Psoas muscle (tissue), 8 donors: ENCODE measurements at regions of chr19 and their contacts with region 1.

Region 1: GRCh38 chr19:9140159-9140874 is at the start of gene ZNF317:
- DNase-seq: peak; percentile 89 to 95
- ATAC-seq: peak; percentile 97 to 100 (median 98)
- H3K4me3 ChIP-seq: peak within 1 kb of the TSS; percentile 85
- H3K27ac ChIP-seq: peak within 1 kb of the TSS; percentile 93
- H3K4me1 ChIP-seq: peaks cover 24% of the 10 kb centered on the region
- H3K27me3 ChIP-seq: no peaks in the 10 kb centered on the region
- CTCF ChIP-seq: no peak
- total RNA-seq, gene ZNF317: 13.7 to 23.6 (median 16.9) TPM

Region 2: DNA sequence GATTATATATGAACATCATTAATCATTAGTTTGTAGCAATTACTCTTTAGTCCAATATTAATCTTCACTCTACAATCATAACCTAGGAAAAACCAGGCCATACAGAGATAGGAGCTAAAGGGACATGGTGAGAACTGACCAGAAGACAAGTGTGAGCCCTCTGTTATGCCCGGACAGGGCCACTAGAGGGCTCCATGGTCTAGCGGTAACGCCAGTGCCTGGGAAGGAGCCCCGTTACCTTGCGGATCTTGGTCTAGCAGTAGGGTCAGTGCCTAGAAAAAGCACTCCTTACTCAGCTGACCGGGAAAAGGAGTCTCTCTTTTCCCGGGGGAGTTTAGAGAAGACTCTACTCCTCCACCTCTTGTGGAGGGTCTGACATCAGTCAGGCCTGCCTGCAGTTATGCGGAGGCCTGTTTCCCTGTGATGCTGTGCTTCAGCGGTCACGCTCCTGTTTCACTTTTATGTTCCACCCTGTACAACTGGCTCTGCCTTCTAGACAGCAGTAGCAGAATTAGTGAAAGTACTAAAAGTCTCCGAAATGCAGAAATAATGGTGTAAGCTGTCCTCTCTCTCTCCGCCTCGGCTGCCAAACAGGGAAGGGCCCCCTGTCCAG is 65.3 kb after region 1 on chr19:
- intact Hi-C with region 1: loop called in 1 of 2 experiments (anchors 5 kb)
- DNase-seq: peak; percentile 61 to 74
- ATAC-seq: peak in 1 of 4 donors; percentile 54
- H3K4me3 ChIP-seq: peak overlapping the region; percentile 54
- H3K27ac ChIP-seq: no peak overlapping the region
- H3K4me1 ChIP-seq: no peaks in the 10 kb centered on the region
- H3K27me3 ChIP-seq: peaks cover 0 to 4% (median 0%) of the 10 kb centered on the region in 3 donors
- CTCF ChIP-seq: peak; percentile 78

Region 3: GRCh38 chr19:9538183-9539058 is 398.1 kb after region 1 on chr19 and contains the start of gene ZNF426:
- intact Hi-C with region 1: loop called in 1 of 2 experiments (anchors 5 kb)
- DNase-seq: peak; percentile 87 to 92
- ATAC-seq: peak; percentile 95 to 99 (median 97)
- H3K4me3 ChIP-seq: peak within 1 kb of the TSS; percentile 91
- H3K27ac ChIP-seq: peak within 1 kb of the TSS; percentile 87
- H3K4me1 ChIP-seq: peaks cover 12% of the 10 kb centered on the region
- H3K27me3 ChIP-seq: no peaks in the 10 kb centered on the region
- CTCF ChIP-seq: no peak
- total RNA-seq, gene ZNF426: 5.2 to 12.3 (median 7.4) TPM

Region 4: DNA sequence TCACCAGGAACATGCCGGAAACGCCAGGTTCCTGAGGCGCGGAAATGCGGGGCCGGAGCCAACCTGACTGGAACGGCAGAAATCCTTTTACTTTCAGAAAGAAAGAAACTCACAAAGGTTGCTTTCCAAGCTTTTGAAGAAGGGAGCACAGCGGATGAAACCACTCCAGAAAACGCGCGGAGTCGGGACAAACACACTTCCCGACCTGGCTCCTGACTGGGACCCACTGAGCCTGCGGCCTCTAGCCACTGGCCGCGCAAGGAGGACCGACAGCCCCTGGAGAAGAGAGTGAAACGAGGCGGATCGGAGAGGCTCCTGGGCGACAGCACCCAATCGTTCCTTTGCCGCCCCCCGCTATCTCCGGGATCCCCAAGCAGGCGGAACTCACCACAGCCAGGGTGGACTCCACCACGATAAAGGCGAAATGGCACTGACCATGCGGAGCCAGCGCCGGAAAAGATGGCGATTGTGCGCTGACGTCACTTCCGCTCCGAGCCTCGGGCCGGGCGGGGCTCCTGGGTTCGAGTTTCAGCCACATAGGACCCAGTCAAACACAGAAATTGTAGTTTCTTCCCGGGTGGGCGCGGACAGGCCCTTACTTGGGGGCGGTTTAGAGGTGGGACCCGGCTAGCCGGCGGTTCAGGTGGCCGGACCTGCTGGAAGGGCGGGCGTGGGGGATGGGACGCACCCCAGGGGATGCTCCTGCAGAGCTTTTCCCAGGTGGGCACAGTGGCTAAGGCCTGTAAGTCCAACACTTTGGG is 443.9 kb after region 1 on chr19 and contains the start of gene ZNF121:
- intact Hi-C with region 1: loop called in 1 of 2 experiments (anchors 10 kb)
- DNase-seq: peak; percentile 86 to 91
- ATAC-seq: peak; percentile 95 to 99 (median 98)
- H3K4me3 ChIP-seq: peak within 1 kb of the TSS; percentile 99
- H3K27ac ChIP-seq: peak within 1 kb of the TSS; percentile 98
- H3K4me1 ChIP-seq: peaks cover 19% of the 10 kb centered on the region
- H3K27me3 ChIP-seq: peaks cover 0 to 17% (median 0%) of the 10 kb centered on the region in 3 donors
- CTCF ChIP-seq: no peak
- total RNA-seq, gene ZNF121: 15.6 to 32.2 (median 18.0) TPM